Caco-2 (cell line): ENCODE measurements at regions of chr6 and their contacts with region 1.

Region 1: DNA sequence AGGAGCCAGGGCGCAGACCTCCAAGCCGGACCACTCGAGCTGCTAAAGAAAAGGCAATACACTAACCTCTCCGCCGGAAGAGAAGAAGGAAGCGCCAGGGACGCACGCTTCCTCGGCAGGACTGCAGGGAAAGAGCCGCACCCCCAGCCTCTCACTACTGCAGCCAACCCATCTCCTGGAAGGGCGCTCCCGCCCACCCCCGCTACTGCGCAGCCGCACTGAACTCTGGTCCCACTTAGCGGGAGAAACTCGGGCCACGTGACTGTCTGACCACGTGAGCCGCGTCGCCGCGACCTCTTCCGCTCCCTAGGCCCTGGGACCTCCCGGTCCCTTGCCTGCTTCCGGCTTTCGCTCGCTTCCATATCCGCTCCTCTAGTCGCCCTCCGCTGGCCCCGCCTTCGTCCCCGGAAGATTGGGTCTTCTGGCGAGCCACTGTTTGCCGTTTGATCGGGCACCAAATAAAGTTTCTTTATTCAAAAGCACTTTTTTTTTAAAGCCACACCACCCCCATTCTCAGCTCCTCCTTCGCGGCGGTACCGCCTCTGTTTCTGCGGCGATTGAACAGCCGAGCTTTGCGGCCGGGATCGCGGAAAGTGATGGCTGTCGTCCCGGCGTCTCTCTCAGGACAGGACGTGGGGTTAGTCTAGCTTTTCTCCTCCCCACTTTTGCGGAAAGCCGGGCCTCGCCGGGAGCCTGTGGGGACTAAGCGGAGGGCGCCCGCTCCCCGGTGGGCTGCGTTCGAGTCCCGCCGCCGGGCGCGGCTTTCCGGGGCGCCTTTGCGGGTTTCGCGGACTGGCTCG is at the start of gene RMND1:
- DNase-seq: peak; percentile 99 to 100
- H3K4me3 ChIP-seq: peak within 1 kb of the TSS; percentile 79
- H3K4me3 Mint-ChIP-seq: peak within 1 kb of the TSS; percentile 98
- H3K27ac Mint-ChIP-seq: peak within 1 kb of the TSS; percentile 81
- H3K4me1 ChIP-seq: peaks cover 29% of the 10 kb centered on the region
- H3K4me1 Mint-ChIP-seq: peaks cover 24% of the 10 kb centered on the region
- H3K27me3 ChIP-seq: no peaks in the 10 kb centered on the region
- H3K27me3 Mint-ChIP-seq: no peaks in the 10 kb centered on the region
- CTCF ChIP-seq: no peak
- total RNA-seq, gene RMND1: 39.1 and 42.9 TPM in 2 replicates

Region 2: GRCh38 chr6:151390276-151391032 is 61.7 kb before region 1 on chr6:
- CTCF ChIA-PET with region 1: no interaction called
- POLR2A ChIA-PET with region 1: no interaction called
- intact Hi-C with region 1: loop called (anchors 2 kb)
- DNase-seq: peak; percentile 97 to 98
- H3K4me3 ChIP-seq: peak overlapping the region; percentile 72
- H3K4me3 Mint-ChIP-seq: peak overlapping the region; percentile 88
- H3K27ac Mint-ChIP-seq: peak overlapping the region; percentile 91
- H3K4me1 ChIP-seq: peaks cover 17% of the 10 kb centered on the region
- H3K4me1 Mint-ChIP-seq: peaks cover 18% of the 10 kb centered on the region
- H3K27me3 ChIP-seq: no peaks in the 10 kb centered on the region
- H3K27me3 Mint-ChIP-seq: no peaks in the 10 kb centered on the region
- CTCF ChIP-seq: no peak

Region 3: GRCh38 chr6:151440930-151441329 is 11.2 kb before region 1 on chr6:
- CTCF ChIA-PET with region 1: no interaction called
- POLR2A ChIA-PET with region 1: no interaction called
- intact Hi-C with region 1: loop called (anchors 1 kb)
- DNase-seq: no peak
- H3K4me3 ChIP-seq: no peak overlapping the region
- H3K4me3 Mint-ChIP-seq: no peak overlapping the region
- H3K27ac Mint-ChIP-seq: peak overlapping the region; percentile 16
- H3K4me1 ChIP-seq: peaks cover 45% of the 10 kb centered on the region
- H3K4me1 Mint-ChIP-seq: peaks cover 12% of the 10 kb centered on the region
- H3K27me3 ChIP-seq: no peaks in the 10 kb centered on the region
- H3K27me3 Mint-ChIP-seq: no peaks in the 10 kb centered on the region
- CTCF ChIP-seq: peak; percentile 32 to 37

Region 4: DNA sequence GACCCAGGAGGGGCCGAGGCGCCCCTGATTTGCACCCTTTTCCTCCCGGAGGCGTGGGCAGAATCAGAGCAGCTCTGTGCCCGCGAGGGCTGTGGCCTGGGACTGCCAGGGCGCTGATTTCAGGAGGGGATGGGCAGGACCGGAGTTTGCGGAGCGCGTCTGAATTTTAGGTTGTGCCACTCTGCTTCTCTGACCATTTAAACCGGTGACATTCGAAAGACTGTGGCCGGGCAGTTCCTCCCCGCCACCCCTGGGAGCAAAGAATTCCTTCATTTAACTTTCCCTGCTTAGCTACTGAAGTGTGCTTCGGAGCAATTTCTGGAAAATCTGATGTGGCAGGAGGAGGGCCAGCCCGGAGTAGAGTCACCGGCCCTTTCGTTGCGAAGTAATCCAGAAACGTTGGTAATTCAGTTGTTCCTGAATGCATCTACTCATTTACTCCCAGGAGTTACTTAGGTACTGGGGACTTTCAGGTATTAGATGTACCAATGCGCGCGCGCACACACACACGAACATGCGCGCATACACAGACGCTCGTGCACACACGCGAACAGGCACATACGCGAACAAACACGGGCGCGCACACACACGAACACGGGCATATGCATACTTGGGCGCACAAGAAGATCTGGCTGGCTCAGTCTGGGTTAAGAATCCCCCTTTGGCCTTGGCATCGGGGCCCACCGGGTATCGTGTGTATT is 42.2 kb after region 1 on chr6:
- CTCF ChIA-PET with region 1: interaction called, 3 read pairs
- POLR2A ChIA-PET with region 1: no interaction called
- intact Hi-C with region 1: loop called (anchors 5 kb)
- DNase-seq: peak; percentile 69 to 70
- H3K4me3 ChIP-seq: peak overlapping the region; percentile 65
- H3K4me3 Mint-ChIP-seq: peak overlapping the region; percentile 88
- H3K27ac Mint-ChIP-seq: peak overlapping the region; percentile 87
- H3K4me1 ChIP-seq: peaks cover 6% of the 10 kb centered on the region; the same call in 1 of the 2 replicates
- H3K4me1 Mint-ChIP-seq: peaks cover 12% of the 10 kb centered on the region
- H3K27me3 ChIP-seq: no peaks in the 10 kb centered on the region
- H3K27me3 Mint-ChIP-seq: no peaks in the 10 kb centered on the region
- CTCF ChIP-seq: no peak

Region 5: DNA sequence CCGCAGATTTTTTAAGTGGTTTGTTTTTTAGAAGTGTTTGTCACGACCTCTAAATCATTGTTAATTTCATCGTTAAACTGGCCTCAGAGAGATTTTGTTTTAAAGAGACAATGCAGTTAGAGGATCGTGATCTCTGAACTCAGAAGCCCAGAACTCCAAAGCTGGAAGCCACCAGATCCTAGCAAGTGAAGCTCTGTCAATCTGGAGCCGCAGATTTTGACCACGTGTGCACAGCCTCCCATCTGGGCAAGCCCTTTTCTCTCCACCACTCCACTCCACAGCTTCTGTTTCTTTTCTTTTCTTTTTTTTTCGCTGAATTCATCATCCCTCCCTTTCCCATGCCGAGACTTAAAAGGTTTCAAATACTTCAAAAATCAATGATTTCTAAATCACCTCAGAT is 213.2 kb after region 1 on chr6:
- CTCF ChIA-PET with region 1: no interaction called
- POLR2A ChIA-PET with region 1: no interaction called
- intact Hi-C with region 1: loop called (anchors 5 kb)
- DNase-seq: no peak
- H3K4me3 ChIP-seq: no peak overlapping the region
- H3K4me3 Mint-ChIP-seq: no peak overlapping the region
- H3K27ac Mint-ChIP-seq: no peak overlapping the region
- H3K4me1 ChIP-seq: peaks cover 29% of the 10 kb centered on the region
- H3K4me1 Mint-ChIP-seq: peaks cover 33% of the 10 kb centered on the region
- H3K27me3 ChIP-seq: no peaks in the 10 kb centered on the region
- H3K27me3 Mint-ChIP-seq: no peaks in the 10 kb centered on the region
- CTCF ChIP-seq: no peak

Region 6: GRCh38 chr6:152309648-152310047 is 857.5 kb after region 1 on chr6:
- CTCF ChIA-PET with region 1: no interaction called
- POLR2A ChIA-PET with region 1: no interaction called
- intact Hi-C with region 1: loop called (anchors 5 kb)
- DNase-seq: no peak
- H3K4me3 ChIP-seq: no peak overlapping the region
- H3K4me3 Mint-ChIP-seq: no peak overlapping the region
- H3K27ac Mint-ChIP-seq: no peak overlapping the region
- H3K4me1 ChIP-seq: peaks cover 16% of the 10 kb centered on the region
- H3K4me1 Mint-ChIP-seq: peaks cover 18% of the 10 kb centered on the region
- H3K27me3 ChIP-seq: no peaks in the 10 kb centered on the region
- H3K27me3 Mint-ChIP-seq: no peaks in the 10 kb centered on the region
- CTCF ChIP-seq: no peak